ENCODE measurements at regions of chr3 and their contacts with region 1.

Region 1: DNA sequence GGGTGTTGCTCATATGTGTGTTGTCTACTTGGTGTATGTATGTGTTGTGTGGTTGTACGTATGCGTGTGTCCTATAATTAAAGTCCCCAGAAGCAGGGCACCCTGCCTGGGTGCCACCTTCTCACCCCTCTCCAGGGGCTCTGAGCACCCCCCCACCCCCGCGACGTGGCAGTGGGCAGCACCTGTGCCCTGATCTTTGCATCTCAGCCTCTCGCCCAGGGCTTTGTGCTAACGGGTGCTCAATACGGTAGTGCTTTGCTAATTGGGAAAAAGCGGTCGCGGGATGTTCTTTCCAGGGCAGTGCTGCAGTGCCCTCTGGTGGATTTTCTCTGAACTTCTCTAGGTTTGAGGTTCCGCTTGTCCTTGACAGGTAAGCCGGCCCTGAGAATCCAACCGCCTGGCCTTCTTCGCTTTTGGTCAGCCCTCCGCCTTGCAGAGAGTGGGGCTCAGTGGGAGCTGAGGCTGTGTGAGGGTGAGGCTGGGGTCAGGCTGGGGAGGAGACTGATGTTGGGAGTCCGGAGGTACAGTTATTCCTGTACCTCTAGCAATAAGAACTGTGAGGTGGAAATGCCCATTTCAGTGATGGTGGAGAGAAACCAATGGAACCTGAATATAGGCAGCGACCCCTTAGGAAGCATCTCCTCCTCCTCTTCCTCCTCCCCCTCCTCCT is 17.6 kb upstream of the EPHB3 start:
- DNase-seq: peak; percentile 69
- ATAC-seq: peak; percentile 96
- H3K4me3 ChIP-seq: no peak overlapping the region
- H3K27ac ChIP-seq: no peak overlapping the region
- H3K4me1 ChIP-seq: no peaks in the 10 kb centered on the region
- H3K27me3 ChIP-seq: peaks cover 52% of the 10 kb centered on the region
- CTCF ChIP-seq: peak; percentile 91
- POLR2A ChIP-seq: no peak
- RAD21 ChIP-seq: peak; percentile 90

Region 2: DNA sequence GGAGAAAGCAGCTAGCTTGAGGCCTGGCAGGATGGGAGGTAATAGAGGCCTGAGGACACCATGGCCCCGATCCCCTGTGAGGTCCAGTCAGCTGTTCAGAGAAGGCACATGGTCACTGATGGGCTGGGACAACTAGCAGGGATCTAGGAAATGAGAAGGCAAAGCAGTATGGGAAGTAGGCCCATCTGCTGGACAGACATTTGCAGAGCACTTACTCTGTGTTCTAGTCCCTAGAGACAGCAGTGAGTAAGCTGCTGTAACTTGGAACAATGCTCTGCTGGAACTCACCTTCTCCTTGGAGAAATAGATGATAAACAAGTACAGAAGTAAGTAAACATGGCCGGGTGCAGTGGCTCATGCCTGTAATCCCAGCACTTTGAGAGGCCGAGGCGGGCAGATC is 261.0 kb before region 1 on chr3:
- CTCF ChIA-PET with region 1: no interaction called
- POLR2A ChIA-PET with region 1: interaction called, 11 read pairs
- dilution Hi-C with region 1: no loop called
- in situ Hi-C with region 1: no loop called
- intact Hi-C with region 1: no loop called
- DNase-seq: no peak
- ATAC-seq: no peak
- H3K4me3 ChIP-seq: no peak overlapping the region
- H3K27ac ChIP-seq: no peak overlapping the region
- H3K4me1 ChIP-seq: no peaks in the 10 kb centered on the region
- H3K27me3 ChIP-seq: peaks cover 48% of the 10 kb centered on the region
- CTCF ChIP-seq: no peak
- POLR2A ChIP-seq: no peak
- RAD21 ChIP-seq: no peak

Region 3: GRCh38 chr3:184362668-184363540 is 181.1 kb before region 1 on chr3:
- CTCF ChIA-PET with region 1: no interaction called
- POLR2A ChIA-PET with region 1: no interaction called
- dilution Hi-C with region 1: loop called (anchors 25 kb)
- in situ Hi-C with region 1: no loop called
- intact Hi-C with region 1: no loop called
- DNase-seq: peak; percentile 97
- ATAC-seq: peak; percentile 64
- H3K4me3 ChIP-seq: peak overlapping the region; percentile 56
- H3K27ac ChIP-seq: peak overlapping the region; percentile 95
- H3K4me1 ChIP-seq: peaks cover 7% of the 10 kb centered on the region
- H3K27me3 ChIP-seq: no peaks in the 10 kb centered on the region
- CTCF ChIP-seq: peak; percentile 68
- POLR2A ChIP-seq: peak; percentile 74
- RAD21 ChIP-seq: peak; percentile 28; the same call in 1 of the 2 replicates

Region 4: DNA sequence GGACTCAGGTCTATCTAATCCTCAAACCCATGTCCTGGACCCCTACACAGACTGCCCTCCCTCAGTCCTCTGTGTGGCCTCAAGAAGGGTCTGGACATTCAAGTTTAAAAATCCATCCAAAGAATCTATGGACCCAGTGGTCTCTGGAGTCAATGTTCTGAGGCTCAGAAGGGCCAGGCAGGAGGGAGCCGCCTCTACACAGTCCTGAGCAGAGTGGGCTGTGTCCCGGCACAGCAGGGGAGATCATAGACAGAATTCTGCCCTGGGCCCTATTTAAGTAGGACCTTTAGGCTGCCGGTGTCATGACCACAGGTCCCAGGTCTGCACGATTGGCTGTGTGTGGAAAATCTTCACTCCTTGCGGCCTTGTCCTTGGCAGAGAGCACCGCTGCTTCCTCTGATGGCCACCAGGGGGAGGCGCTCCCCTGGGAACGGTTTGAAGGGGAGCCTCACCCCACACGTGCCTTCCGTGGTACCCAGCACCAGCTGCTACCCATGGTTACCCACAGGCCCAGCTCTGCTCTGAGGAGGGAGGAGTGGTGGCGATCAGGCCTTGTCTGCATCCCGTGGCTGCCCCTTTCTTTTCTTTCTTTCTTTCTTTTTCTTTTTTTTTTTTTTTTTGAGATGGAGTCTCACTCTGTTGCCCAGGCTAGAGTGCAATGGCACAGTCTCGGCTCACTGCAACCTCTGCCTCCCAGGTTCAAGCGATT is 126.2 kb before region 1 on chr3:
- CTCF ChIA-PET with region 1: no interaction called
- POLR2A ChIA-PET with region 1: no interaction called
- dilution Hi-C with region 1: no loop called
- in situ Hi-C with region 1: no loop called
- intact Hi-C with region 1: loop called (anchors 1 kb)
- DNase-seq: peak; percentile 51
- ATAC-seq: peak; percentile 95
- H3K4me3 ChIP-seq: no peak overlapping the region
- H3K27ac ChIP-seq: no peak overlapping the region
- H3K4me1 ChIP-seq: no peaks in the 10 kb centered on the region
- H3K27me3 ChIP-seq: peaks cover 21% of the 10 kb centered on the region
- CTCF ChIP-seq: peak; percentile 82
- POLR2A ChIP-seq: no peak
- RAD21 ChIP-seq: peak; percentile 85

Region 5: DNA sequence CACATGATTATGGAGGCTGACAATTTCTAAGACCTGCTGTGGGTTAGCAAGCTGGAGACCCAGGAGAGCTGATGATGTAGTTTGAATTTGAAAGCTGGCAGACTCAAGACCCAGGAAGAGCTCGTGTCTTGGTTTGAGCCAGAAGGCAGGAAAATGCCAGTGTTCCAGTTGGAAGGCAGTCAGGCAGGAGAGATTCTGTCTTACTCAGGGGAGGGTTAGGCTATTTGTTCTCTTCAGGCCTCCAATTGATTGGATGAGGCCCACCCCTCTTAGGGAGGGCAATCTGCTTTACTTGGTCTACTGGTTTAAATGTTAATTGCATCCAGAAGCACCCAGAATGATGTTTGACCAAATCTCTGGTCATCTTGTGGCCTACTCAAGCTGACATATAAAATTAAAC is 1321.3 kb after region 1 on chr3:
- CTCF ChIA-PET with region 1: no interaction called
- POLR2A ChIA-PET with region 1: no interaction called
- dilution Hi-C with region 1: no loop called
- in situ Hi-C with region 1: no loop called
- intact Hi-C with region 1: no loop called
- DNase-seq: no peak
- ATAC-seq: no peak
- H3K4me3 ChIP-seq: no peak overlapping the region
- H3K27ac ChIP-seq: no peak overlapping the region
- H3K4me1 ChIP-seq: no peaks in the 10 kb centered on the region
- H3K27me3 ChIP-seq: peaks cover 11% of the 10 kb centered on the region
- CTCF ChIP-seq: no peak
- POLR2A ChIP-seq: no peak
- RAD21 ChIP-seq: no peak

Measured in IMR-90 (cell line).